ENCODE measurements at regions of chr10 and their contacts with region 1.

Region 1: GRCh38 chr10:45672181-45673073 is at the start of gene ZFAND4:
- DNase-seq: peak; percentile 99
- ATAC-seq: peak; percentile 100
- H3K4me3 ChIP-seq: peak within 1 kb of the TSS; percentile 67
- H3K27ac ChIP-seq: peak within 1 kb of the TSS in 1 of 2 donors; percentile 55
- H3K4me1 ChIP-seq: peaks cover 0 to 2% of the 10 kb centered on the region in 2 donors
- H3K27me3 ChIP-seq: no peaks in the 10 kb centered on the region
- total RNA-seq, gene ZFAND4: 15.0 to 16.8 TPM

Region 2: GRCh38 chr10:45464958-45465567 is 207.4 kb before region 1 on chr10:
- intact Hi-C with region 1: loop called in 1 of 2 experiments (anchors 5 kb)
- DNase-seq: peak; percentile 86 to 88
- ATAC-seq: peak; percentile 94
- H3K4me3 ChIP-seq: no peak overlapping the region
- H3K27ac ChIP-seq: no peak overlapping the region
- H3K4me1 ChIP-seq: no peaks in the 10 kb centered on the region
- H3K27me3 ChIP-seq: no peaks in the 10 kb centered on the region

Region 3: DNA sequence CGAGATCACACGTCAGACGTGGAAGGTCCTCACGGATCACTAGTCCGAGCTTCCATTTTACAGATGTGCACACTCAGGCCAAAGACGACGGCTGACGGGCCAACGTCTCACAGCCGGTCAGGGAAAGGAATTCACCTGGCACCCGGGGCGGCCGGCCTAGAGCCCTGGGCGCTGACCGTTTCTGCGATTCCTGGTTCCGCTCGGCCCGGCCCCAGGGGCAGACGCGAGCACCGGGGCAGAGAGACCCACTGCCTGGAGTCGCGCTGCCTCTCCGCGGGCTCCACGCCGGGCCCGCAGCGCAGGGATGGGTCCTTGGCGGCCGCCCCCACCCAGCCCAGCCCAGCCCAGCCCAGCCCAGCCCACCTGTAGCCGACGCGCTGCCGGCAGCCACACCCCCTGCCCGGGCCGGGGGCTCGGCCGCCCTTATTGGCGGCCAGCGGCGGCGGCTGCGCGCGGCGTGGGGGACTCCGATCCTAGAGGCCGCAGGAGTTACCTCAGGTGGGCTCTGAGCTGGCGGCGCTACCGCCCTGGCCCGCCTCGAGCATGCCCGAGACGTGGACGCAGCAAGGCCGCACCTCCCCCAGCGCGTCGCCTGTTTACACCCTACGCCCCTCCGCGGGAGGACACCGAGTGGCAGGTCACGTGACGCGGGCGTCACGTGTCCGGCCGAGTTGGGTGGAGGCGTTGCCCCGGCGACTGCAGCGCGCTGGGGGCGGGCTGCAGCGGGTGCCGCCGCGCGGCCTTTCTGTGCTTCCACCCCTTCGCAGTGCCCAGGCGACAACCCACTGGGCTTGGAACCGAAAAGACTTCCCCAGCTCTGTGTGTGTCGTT is 77.9 kb before region 1 on chr10:
- intact Hi-C with region 1: loop called in 1 of 2 experiments (anchors 1 kb)
- DNase-seq: peak; percentile 95 to 97
- ATAC-seq: peak; percentile 99
- H3K4me3 ChIP-seq: peak overlapping the region; percentile 78 to 86
- H3K27ac ChIP-seq: no peak overlapping the region
- H3K4me1 ChIP-seq: no peaks in the 10 kb centered on the region
- H3K27me3 ChIP-seq: no peaks in the 10 kb centered on the region

Region 4: GRCh38 chr10:45997557-45997956 is 325.1 kb after region 1 on chr10:
- intact Hi-C with region 1: no loop called
- DNase-seq: no peak
- ATAC-seq: no peak
- H3K4me3 ChIP-seq: no peak overlapping the region
- H3K27ac ChIP-seq: no peak overlapping the region
- H3K4me1 ChIP-seq: no peaks in the 10 kb centered on the region
- H3K27me3 ChIP-seq: no peaks in the 10 kb centered on the region

Measured in aorta (tissue), 5 donors.